HepG2 (cell line): ENCODE measurements at regions of chr12 and their contacts with region 1.

Region 1: DNA sequence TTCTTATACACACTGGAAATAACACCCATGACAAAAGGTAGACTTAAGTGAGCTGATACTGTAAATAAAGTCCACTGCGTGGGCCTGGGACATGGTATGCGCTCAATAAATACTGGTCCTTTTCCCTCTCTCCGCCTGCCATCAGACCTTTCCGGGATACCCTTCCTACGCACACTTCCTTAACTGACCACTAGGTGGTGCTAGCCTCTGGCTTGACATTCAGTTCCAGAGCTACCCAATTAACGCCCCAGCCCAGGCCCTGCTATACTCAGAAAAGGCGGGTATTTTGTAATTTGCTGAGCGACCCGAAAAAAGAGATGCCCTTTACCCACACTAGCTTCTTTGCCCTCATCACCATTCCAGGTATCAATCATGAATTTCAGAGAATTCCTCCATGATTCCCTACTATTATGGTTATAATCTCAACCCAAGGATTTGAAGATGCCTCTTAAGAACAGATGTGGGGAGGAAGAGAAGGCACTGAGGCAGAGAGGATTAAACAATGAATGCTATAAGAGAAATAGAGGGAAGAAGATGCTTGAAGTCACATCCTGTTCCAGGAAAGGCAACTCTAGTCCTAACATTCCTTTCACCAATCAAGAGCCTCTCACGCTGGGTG is 3.9 kb upstream of the LRP1 start:
- DNase-seq: peak; percentile 73
- ATAC-seq: peak; percentile 49
- H3K4me3 ChIP-seq: no peak overlapping the region
- H3K27ac ChIP-seq: no peak overlapping the region
- H3K4me1 ChIP-seq: peaks cover 10% of the 10 kb centered on the region
- H3K27me3 ChIP-seq: no peaks in the 10 kb centered on the region; a peak in 1 of 5 replicates
- CTCF ChIP-seq: peak; percentile 91
- EP300 ChIP-seq: no peak
- POLR2A ChIP-seq: no peak
- RAD21 ChIP-seq: peak; percentile 90

Region 2: GRCh38 chr12:56709759-56710376 is 414.5 kb before region 1 on chr12:
- CTCF ChIA-PET with region 1: no interaction called
- POLR2A ChIA-PET with region 1: no interaction called
- in situ Hi-C with region 1: no loop called
- intact Hi-C with region 1: no loop called
- DNase-seq: no peak
- ATAC-seq: peak; percentile 62
- H3K4me3 ChIP-seq: no peak overlapping the region
- H3K27ac ChIP-seq: no peak overlapping the region
- H3K4me1 ChIP-seq: peaks cover 5% of the 10 kb centered on the region; the same call in 1 of the 2 replicates
- H3K27me3 ChIP-seq: no peaks in the 10 kb centered on the region
- CTCF ChIP-seq: no peak
- EP300 ChIP-seq: no peak
- POLR2A ChIP-seq: no peak
- RAD21 ChIP-seq: no peak

Region 3: DNA sequence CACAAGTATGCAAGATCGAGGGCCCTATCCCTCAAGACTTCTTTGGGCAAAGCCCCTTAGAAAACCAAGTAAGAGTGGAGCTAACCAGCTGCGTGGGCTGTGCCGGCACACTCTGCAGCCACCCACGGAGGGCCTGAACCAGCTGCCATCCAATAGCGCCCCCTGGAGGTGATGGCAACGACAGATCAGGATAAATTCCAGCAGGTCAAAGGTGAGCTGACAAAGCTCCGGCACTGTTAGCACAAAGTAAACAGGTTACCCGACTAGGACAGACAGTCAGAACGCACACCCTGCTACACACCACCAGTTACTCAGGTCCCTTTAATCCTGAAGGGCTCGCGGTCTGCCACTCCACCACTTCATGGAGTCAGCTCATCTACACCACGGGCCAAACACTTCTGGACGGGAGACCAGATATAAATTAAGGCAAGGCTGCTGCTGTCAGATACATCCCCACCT is 122.9 kb before region 1 on chr12:
- CTCF ChIA-PET with region 1: no interaction called
- POLR2A ChIA-PET with region 1: no interaction called
- in situ Hi-C with region 1: no loop called
- intact Hi-C with region 1: no loop called
- DNase-seq: peak; percentile 87
- ATAC-seq: peak; percentile 93
- H3K4me3 ChIP-seq: no peak overlapping the region
- H3K27ac ChIP-seq: peak overlapping the region; percentile 14
- H3K4me1 ChIP-seq: peaks cover 28% of the 10 kb centered on the region
- H3K27me3 ChIP-seq: no peaks in the 10 kb centered on the region; a peak in 2 of 5 replicates
- CTCF ChIP-seq: peak; percentile 96
- EP300 ChIP-seq: peak in 1 of 2 experiments; percentile 18; a peak in 1 of 4 replicates
- POLR2A ChIP-seq: no peak
- RAD21 ChIP-seq: peak; percentile 88

Region 4: GRCh38 chr12:57069523-57069922 is 54.8 kb before region 1 on chr12:
- CTCF ChIA-PET with region 1: no interaction called
- POLR2A ChIA-PET with region 1: interaction called, 10 read pairs
- in situ Hi-C with region 1: no loop called
- intact Hi-C with region 1: no loop called
- DNase-seq: peak; percentile 81
- ATAC-seq: peak; percentile 97
- H3K4me3 ChIP-seq: no peak overlapping the region
- H3K27ac ChIP-seq: no peak overlapping the region
- H3K4me1 ChIP-seq: no peaks in the 10 kb centered on the region
- H3K27me3 ChIP-seq: no peaks in the 10 kb centered on the region
- CTCF ChIP-seq: peak; percentile 90
- EP300 ChIP-seq: no peak
- POLR2A ChIP-seq: no peak
- RAD21 ChIP-seq: peak; percentile 94

Region 5: DNA sequence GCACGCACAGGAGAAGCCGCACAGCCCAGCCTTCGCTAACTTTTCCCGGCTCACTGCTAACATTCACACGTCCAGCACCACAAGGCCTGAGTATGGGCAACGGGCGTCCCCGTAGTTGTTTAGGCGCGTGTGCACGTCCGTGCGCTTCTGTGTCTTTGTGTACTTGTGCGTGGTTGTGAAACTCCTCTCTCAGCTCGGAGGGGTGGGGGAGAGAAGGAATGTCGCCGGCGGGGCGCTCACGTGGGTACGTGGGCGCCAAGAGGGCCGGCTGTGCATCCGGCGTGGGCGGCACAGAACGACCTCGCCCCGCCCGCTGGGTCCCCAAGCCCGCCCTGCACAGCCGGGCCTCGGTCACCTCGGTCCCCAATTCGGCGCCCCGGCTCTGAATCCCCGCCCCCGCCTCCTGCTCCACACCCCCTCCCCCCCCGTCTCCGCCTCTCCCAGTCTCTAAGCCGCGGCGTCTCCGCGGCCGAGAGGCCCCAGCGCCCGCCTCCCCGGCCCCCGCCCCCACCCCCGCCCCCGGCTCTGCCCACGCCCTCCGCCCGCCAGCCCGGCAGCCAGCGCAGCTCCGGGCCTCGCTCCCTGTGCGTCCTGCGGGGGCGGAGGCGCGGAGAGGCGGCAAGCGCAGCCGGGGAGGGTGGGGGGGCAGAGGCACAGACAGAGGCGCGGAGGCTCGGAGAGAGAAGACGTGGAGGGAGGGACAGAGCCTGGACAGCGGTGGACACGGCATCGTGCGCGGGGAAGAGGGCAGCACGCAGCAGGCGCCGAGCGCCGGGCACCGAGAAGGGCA is 35.7 kb before region 1 on chr12 and contains the start of gene NAB2:
- CTCF ChIA-PET with region 1: no interaction called
- POLR2A ChIA-PET with region 1: interaction called, 33 read pairs
- in situ Hi-C with region 1: no loop called
- intact Hi-C with region 1: no loop called
- DNase-seq: peak; percentile 95
- ATAC-seq: peak; percentile 80
- H3K4me3 ChIP-seq: peak within 1 kb of the TSS; percentile 83 to 93 (median 84)
- H3K27ac ChIP-seq: peak within 1 kb of the TSS; percentile 88
- H3K4me1 ChIP-seq: peaks cover 28% of the 10 kb centered on the region
- H3K27me3 ChIP-seq: no peaks in the 10 kb centered on the region; a peak in 1 of 5 replicates
- CTCF ChIP-seq: 0 out of 2 replicates have a peak, but pooled peaks have one; percentile 11
- EP300 ChIP-seq: peak; percentile 21 to 73; a peak in 3 of 4 replicates
- POLR2A ChIP-seq: peak; percentile 64 to 89
- RAD21 ChIP-seq: peak; percentile 16; the same call in 1 of the 2 replicates
- total RNA-seq, gene NAB2: 11.0 and 11.7 TPM in 2 replicates

Region 6: GRCh38 chr12:57135527-57136326 is 11.4 kb after region 1 on chr12:
- CTCF ChIA-PET with region 1: no interaction called
- POLR2A ChIA-PET with region 1: interaction called, 157 read pairs
- in situ Hi-C with region 1: no loop called
- intact Hi-C with region 1: no loop called
- DNase-seq: no peak
- ATAC-seq: no peak
- H3K4me3 ChIP-seq: no peak overlapping the region
- H3K27ac ChIP-seq: peak overlapping the region; percentile 42
- H3K4me1 ChIP-seq: peaks cover 100% of the 10 kb centered on the region
- H3K27me3 ChIP-seq: no peaks in the 10 kb centered on the region
- CTCF ChIP-seq: no peak
- EP300 ChIP-seq: no peak
- POLR2A ChIP-seq: no peak
- RAD21 ChIP-seq: no peak

Region 7: DNA sequence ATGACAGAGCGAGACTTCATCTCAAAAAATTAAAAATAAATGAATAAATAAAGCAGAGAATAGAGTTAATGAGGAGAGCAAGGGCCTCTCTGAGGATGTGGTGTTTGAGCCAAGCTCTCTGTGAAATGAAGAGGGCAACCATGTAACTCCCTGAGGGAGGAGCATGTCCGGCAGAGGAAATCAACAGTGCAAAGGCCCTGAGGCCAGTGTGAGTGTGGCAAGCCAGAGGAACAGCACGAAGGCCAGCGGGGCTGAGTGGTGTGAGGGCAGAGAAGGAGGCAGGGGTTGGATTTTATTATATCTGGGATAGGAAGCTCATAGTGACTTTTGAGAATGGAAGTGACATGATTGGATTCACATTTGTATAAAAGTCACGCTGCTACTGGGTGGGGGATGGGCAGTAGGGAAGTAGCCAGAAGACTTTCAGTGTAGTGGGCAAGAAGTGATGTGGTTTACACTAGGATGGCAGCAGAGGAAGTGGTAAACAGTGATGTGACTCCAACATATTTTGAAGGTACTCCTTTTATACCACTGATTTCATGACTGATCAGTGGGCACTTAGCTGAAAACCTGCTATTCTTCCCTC is 33.3 kb after region 1 on chr12:
- CTCF ChIA-PET with region 1: no interaction called
- POLR2A ChIA-PET with region 1: interaction called, 827 read pairs
- in situ Hi-C with region 1: no loop called
- intact Hi-C with region 1: no loop called
- DNase-seq: no peak
- ATAC-seq: no peak
- H3K4me3 ChIP-seq: no peak overlapping the region
- H3K27ac ChIP-seq: no peak overlapping the region
- H3K4me1 ChIP-seq: peaks cover 30% of the 10 kb centered on the region
- H3K27me3 ChIP-seq: no peaks in the 10 kb centered on the region
- CTCF ChIP-seq: no peak
- EP300 ChIP-seq: no peak
- POLR2A ChIP-seq: no peak
- RAD21 ChIP-seq: no peak

Region 8: DNA sequence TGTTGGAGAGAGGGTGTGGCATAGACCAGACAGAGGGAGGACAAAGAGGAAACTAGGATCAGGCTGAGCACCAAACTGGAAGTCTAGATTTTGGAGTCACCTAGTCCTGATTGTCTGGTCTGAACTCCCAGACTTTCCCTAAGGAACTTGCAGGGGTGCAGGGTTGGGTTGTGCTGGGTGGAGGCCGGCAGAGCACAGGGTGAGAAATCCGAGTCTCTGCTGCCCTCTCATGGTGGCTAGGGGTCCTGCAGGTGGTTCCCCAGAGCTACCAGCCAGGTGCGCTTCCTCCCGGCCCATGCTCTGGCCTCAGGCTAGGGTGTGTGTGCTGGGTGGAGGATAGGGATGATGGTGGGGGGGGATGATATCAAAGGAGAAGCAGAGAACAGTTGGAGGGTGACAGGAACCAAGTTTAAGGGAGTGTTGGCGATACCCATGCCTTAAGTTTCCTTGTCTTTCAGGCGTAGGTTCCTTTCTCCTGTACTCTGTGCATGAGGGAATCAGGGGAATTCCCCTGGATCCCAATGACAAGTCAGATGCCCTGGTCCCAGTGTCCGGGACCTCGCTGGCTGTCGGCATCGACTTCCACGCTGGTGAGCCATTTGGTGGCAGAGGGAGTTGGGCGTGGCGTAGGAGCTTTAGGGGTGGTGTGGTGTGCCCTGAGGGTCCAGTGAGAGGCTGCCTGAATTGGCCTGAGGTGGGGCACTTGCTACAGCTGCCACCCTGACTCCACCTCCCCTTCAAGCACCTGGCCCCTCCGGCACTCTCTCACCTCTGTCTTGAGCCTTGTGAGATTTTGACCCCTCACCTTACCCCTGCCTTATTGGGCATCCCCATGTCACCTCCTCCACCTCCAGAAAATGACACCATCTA is 58.8 kb after region 1 on chr12:
- CTCF ChIA-PET with region 1: interaction called, 37 read pairs
- POLR2A ChIA-PET with region 1: interaction called, 36 read pairs
- in situ Hi-C with region 1: no loop called
- intact Hi-C with region 1: loop called (anchors 1 kb)
- DNase-seq: peak; percentile 39
- ATAC-seq: peak; percentile 82
- H3K4me3 ChIP-seq: no peak overlapping the region
- H3K27ac ChIP-seq: no peak overlapping the region
- H3K4me1 ChIP-seq: no peaks in the 10 kb centered on the region
- H3K27me3 ChIP-seq: no peaks in the 10 kb centered on the region
- CTCF ChIP-seq: peak; percentile 95
- EP300 ChIP-seq: no peak
- POLR2A ChIP-seq: no peak
- RAD21 ChIP-seq: peak; percentile 90

Region 9: DNA sequence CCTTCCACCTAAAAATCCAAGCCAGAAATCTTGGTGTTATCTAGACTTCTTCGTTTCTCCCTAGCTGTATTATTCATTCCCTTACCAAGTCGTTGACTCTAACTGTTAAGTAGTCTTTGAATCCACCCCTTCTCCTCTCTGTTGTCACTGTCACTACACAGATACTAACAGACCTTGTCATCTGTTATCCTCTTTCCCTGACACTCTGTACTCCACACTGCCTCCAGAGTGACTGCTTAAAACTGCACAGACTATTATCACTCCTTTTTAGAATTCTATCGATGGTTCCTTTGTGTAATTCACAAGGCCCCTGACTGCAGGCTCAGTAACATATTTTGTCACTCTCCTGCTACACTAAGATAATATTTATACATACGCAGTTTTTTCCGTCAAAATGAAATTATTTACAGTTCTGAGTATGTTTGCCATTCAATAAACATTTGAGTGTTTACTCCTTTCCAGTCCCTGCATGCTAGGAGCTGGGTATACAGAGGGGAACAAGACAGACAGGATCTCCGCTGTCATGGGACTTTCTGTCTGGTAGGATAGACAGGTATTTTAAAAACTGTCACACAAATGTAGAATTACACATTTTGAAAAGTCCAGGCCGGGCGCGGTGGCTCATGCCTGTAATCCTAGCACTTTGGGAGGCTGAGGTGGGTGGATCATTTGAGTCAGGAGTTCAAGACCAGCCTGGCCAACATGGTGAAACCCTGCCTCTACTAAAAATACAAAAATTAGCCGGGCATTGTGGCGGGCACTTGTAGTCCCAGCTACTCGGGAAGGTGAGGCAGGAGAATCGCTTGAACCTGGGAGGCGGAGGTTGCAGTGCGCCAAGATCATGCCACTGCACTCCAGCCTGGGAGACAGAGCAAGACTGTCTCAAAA is 367.3 kb after region 1 on chr12:
- CTCF ChIA-PET with region 1: no interaction called
- POLR2A ChIA-PET with region 1: no interaction called
- in situ Hi-C with region 1: no loop called
- intact Hi-C with region 1: no loop called
- DNase-seq: peak; percentile 44
- ATAC-seq: peak; percentile 71
- H3K4me3 ChIP-seq: no peak overlapping the region
- H3K27ac ChIP-seq: peak overlapping the region; percentile 1
- H3K4me1 ChIP-seq: peaks cover 28% of the 10 kb centered on the region
- H3K27me3 ChIP-seq: peaks cover 0 to 4% of the 10 kb centered on the region in 2 experiments; a peak in 1 of 5 replicates
- CTCF ChIP-seq: no peak
- EP300 ChIP-seq: no peak
- POLR2A ChIP-seq: no peak
- RAD21 ChIP-seq: no peak